ENCODE measurements at regions of chr13 and their contacts with region 1.

Region 1: DNA sequence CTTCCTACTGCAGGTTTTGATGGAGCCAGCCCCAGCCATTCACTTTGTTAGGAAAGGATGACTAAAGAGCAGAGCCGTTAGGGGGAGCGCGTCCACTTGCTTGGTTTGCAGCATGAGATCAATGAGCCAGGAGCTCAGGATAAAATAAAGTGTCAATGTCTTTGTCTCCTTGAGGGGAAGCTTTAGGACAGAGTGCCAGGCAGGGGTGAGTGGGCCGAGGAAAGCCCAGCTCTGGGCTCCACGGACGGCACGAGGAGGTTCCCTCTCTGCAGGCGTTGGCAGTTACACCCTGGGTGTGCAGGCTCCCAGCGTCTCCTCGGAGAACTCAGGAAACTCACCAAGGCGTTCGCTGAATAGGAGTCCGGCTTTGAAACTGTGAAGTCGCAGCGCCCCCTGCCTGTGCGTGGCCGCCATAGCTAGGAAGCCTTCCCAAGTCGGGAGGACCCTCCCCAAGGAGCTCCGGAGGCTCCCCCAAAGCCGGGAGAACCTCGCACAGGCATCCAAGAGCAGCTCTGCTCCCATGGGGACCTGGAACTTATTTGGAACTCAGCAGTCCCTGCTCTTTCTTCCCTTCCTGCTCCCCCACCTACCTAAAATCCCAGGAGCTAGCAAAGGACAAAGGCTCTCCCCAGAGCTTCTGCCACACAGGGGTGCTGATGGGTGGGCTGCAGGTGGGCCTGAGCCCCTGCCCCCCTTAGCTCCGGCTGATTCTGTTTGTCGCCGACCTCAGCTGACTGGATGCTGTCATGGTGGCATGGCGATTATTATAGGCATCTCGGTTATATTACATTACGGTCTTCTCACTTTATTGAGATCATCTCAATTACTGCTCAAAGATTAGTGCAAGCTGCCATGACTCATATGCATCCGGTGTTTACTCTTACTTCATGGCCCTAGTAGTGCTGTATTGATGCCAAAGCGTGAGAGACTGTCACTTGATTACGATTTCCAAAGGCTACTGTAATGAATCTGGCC is 34.4 kb downstream of the GSX1 start:
- DNase-seq: peak; percentile 97
- H3K4me3 ChIP-seq: peak overlapping the region; percentile 27 to 39 (median 32)
- H3K27ac ChIP-seq: no peak overlapping the region
- H3K4me1 ChIP-seq: peaks cover 5 to 19% (median 18%) of the 10 kb centered on the region in 4 donors
- H3K27me3 ChIP-seq: peaks cover 0 to 86% (median 11%) of the 10 kb centered on the region in 4 donors
- CTCF ChIP-seq: peak; percentile 90 to 95 (median 93)
- EP300 ChIP-seq: no peak
- POLR2A ChIP-seq: no peak

Region 2: DNA sequence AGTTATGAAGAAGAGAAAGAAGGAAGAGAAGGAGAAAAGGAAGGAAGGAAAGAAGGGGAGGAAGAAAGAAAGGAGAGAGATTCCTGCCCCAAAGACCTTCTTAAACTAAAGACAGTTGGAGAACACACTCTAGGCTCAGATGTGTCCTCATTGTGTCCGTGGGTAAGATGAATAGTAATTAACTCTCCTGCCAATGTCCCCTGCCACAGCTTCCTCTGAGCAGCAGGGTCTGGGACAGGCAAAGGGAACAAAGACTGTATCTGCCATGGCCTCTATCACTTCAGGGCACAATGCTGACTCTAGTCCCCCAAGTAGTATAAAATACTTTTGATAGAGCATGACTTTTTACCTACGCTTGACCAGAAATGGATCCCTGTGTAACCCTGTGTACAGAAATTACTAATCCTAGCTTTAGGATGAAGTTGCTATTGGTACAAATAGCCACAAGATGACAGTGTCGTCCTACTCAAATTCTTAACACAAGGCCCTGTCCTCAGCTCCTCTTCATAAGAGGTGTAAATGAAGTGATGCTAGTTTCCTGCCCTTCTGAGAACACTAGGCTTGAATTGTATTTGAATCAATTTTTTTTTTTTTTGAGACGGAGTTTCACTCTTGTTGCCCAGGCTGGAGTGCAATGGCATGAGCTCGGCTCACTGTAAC is 879.9 kb before region 1 on chr13:
- intact Hi-C with region 1: loop called (anchors 10 kb)
- DNase-seq: no peak
- H3K4me3 ChIP-seq: no peak overlapping the region
- H3K27ac ChIP-seq: no peak overlapping the region
- H3K4me1 ChIP-seq: peaks cover 0 to 5% (median 3%) of the 10 kb centered on the region in 4 donors
- H3K27me3 ChIP-seq: no peaks in the 10 kb centered on the region
- CTCF ChIP-seq: peak; percentile 81 to 88 (median 84)
- EP300 ChIP-seq: no peak
- POLR2A ChIP-seq: no peak

Region 3: GRCh38 chr13:27374650-27375049 is 452.0 kb before region 1 on chr13:
- intact Hi-C with region 1: loop called (anchors 2 kb)
- DNase-seq: no peak
- H3K4me3 ChIP-seq: no peak overlapping the region
- H3K27ac ChIP-seq: no peak overlapping the region
- H3K4me1 ChIP-seq: peaks cover 0 to 16% (median 7%) of the 10 kb centered on the region in 4 donors
- H3K27me3 ChIP-seq: peaks cover 0 to 34% (median 0%) of the 10 kb centered on the region in 4 donors
- CTCF ChIP-seq: peak; percentile 73 to 77 (median 76)
- EP300 ChIP-seq: no peak
- POLR2A ChIP-seq: no peak

Region 4: DNA sequence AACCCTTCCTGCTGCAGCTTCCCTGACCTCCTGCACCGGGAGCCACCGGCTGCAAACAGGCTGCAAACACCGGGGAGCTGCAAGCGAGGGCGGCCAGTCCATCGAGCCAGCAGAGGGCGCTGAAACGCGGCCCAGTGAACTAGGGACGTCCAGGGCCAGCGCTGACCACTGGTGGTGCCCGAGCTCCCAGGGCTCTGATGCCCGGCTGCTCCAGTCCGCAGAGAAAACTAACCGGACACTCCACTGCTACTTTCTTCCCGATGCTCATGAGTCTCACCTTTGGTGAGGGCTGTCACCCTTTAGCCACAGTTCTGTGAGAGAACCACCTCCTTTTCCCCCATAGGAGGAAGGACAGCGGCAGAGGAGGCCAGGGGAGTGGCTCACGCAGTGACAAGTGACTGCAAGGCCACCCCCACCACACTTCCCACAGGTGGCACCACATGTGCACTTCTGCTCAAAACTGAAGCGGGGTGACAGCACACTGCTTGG is 293.5 kb before region 1 on chr13:
- intact Hi-C with region 1: loop called (anchors 1 kb)
- DNase-seq: peak; percentile 92
- H3K4me3 ChIP-seq: peak overlapping the region in 1 of 4 donors; percentile 22
- H3K27ac ChIP-seq: no peak overlapping the region
- H3K4me1 ChIP-seq: peaks cover 0 to 19% (median 16%) of the 10 kb centered on the region in 4 donors
- H3K27me3 ChIP-seq: peaks cover 0 to under 1% (median 0%) of the 10 kb centered on the region in 4 donors
- CTCF ChIP-seq: peak; percentile 78 to 95 (median 89)
- EP300 ChIP-seq: no peak
- POLR2A ChIP-seq: no peak

Region 5: DNA sequence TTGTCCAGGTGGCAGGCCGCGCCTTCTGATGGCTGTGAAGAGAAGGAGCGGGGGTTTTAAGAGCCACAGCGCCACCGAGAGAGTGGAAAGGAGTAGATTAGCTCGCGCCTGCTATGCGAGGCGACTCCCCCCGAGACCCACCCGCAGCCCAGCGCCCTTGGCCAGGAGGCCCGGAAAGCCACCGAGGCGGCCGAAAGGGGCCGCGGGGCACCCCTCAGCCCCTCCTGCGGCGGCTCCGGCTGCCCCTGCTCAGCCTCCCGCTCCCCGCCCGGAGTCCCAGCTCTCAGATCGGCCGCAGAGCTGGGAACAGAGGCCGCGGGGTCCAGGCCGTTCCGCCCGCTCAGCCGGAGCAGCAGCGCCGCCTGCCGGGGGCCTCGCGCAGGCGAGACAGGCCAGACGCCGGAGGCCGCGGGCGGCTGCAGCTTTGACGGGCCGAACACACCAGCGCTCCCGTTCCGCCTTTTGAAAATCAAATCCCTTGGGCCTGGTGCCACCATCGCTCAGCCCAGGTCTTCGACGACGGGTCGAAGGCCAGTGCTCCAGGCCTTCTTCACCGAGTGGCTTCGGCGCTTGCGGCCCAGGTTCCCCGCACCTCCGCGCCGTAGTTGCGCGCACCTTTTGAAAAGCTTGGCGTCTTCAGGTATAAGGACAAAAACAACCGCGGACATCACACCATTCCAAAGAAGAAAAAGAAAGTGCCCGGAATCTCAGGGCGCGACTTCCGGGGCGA is 127.2 kb after region 1 on chr13:
- intact Hi-C with region 1: loop called (anchors 10 kb)
- DNase-seq: peak; percentile 88
- H3K4me3 ChIP-seq: peak overlapping the region; percentile 47 to 56 (median 50)
- H3K27ac ChIP-seq: no peak overlapping the region
- H3K4me1 ChIP-seq: peaks cover 13 to 21% (median 15%) of the 10 kb centered on the region in 4 donors
- H3K27me3 ChIP-seq: peaks cover 0 to 95% (median 55%) of the 10 kb centered on the region in 4 donors
- CTCF ChIP-seq: peak; percentile 65 to 83 (median 73)
- EP300 ChIP-seq: no peak
- POLR2A ChIP-seq: no peak

Region 6: GRCh38 chr13:27985600-27985999 is 158.9 kb after region 1 on chr13:
- intact Hi-C with region 1: loop called (anchors 2 kb)
- DNase-seq: no peak
- H3K4me3 ChIP-seq: no peak overlapping the region
- H3K27ac ChIP-seq: no peak overlapping the region
- H3K4me1 ChIP-seq: peaks cover 0 to 3% (median 2%) of the 10 kb centered on the region in 4 donors
- H3K27me3 ChIP-seq: peaks cover 0 to 88% (median 20%) of the 10 kb centered on the region in 4 donors
- CTCF ChIP-seq: no peak
- EP300 ChIP-seq: no peak
- POLR2A ChIP-seq: no peak

Measured in esophagus muscularis mucosa (tissue), 4 donors.